ENCODE measurements at regions of chr13 and their contacts with region 1.

Region 1: DNA sequence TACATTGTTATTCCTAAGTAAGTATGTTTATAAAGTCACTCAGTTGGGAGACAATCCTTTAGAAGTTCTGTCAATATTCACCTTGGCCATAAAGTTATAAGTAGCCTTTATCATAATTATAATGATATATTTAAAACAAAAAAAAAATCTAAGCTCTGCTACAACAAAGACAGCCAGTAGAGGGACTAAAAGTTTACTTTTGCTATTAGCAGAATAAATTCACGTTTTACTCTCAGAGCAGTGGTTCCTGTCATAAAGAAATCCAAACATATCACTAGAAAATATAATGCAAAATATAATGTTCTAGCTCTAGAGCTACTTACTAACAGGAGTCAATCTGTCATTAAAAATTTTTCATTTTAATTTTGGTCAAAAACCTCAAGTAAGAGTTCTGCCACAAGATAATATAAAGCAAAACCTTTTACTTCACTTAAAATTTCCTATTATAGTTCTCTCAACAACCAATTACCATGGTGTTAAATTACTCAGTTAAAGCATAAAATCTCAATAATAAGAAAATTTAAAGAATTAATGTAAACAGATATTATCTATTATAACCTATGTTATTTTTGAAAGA is 17.7 kb downstream of the INTS6 start:
- DNase-seq: no peak
- H3K4me3 ChIP-seq: no peak overlapping the region
- H3K27ac ChIP-seq: no peak overlapping the region
- H3K4me1 ChIP-seq: no peaks in the 10 kb centered on the region
- H3K27me3 ChIP-seq: no peaks in the 10 kb centered on the region
- CTCF ChIP-seq: peak; percentile 80

Region 2: GRCh38 chr13:51465124-51465523 is 30.0 kb after region 1 on chr13:
- CTCF ChIA-PET with region 1: no interaction called
- POLR2A ChIA-PET with region 1: no interaction called
- intact Hi-C with region 1: no loop called
- DNase-seq: no peak
- H3K4me3 ChIP-seq: no peak overlapping the region
- H3K27ac ChIP-seq: no peak overlapping the region
- H3K4me1 ChIP-seq: no peaks in the 10 kb centered on the region
- H3K27me3 ChIP-seq: no peaks in the 10 kb centered on the region
- CTCF ChIP-seq: no peak

Region 3: GRCh38 chr13:51562011-51562671 is 127.1 kb after region 1 on chr13:
- CTCF ChIA-PET with region 1: no interaction called
- POLR2A ChIA-PET with region 1: interaction called, 16 read pairs
- intact Hi-C with region 1: no loop called
- DNase-seq: no peak
- H3K4me3 ChIP-seq: no peak overlapping the region
- H3K27ac ChIP-seq: no peak overlapping the region
- H3K4me1 ChIP-seq: peaks cover 21% of the 10 kb centered on the region
- H3K27me3 ChIP-seq: no peaks in the 10 kb centered on the region
- CTCF ChIP-seq: no peak